ENCODE measurements at regions of chr6 and their contacts with region 1.

Region 1: GRCh38 chr6:28863604-28864320 is 60.0 kb downstream of the TRIM27 start:
- DNase-seq: peak in 1 of 2 donors; percentile 86
- H3K4me3 ChIP-seq: peak overlapping the region; percentile 66 to 81
- H3K27ac ChIP-seq: peak overlapping the region; percentile 59 to 78
- H3K4me1 ChIP-seq: peaks cover 0 to 3% of the 10 kb centered on the region in 2 donors
- H3K27me3 ChIP-seq: no peaks in the 10 kb centered on the region
- CTCF ChIP-seq: no peak

Region 2: GRCh38 chr6:28895134-28895812 is 31.5 kb after region 1 on chr6:
- intact Hi-C with region 1: loop called (anchors 1 kb)
- DNase-seq: peak; percentile 86 to 98
- H3K4me3 ChIP-seq: peak overlapping the region; percentile 60 to 72
- H3K27ac ChIP-seq: peak overlapping the region; percentile 95 to 96
- H3K4me1 ChIP-seq: no peaks in the 10 kb centered on the region
- H3K27me3 ChIP-seq: no peaks in the 10 kb centered on the region
- CTCF ChIP-seq: no peak